Calu3 (cell line): ENCODE measurements at regions of chr12 and their contacts with region 1.

Region 1: GRCh38 chr12:116236148-116236731 is 41.3 kb downstream of the MED13L start:
- DNase-seq: peak; percentile 42
- H3K4me3 Mint-ChIP-seq: no peak overlapping the region
- H3K27ac Mint-ChIP-seq: no peak overlapping the region
- H3K4me1 Mint-ChIP-seq: no peaks in the 10 kb centered on the region
- H3K27me3 Mint-ChIP-seq: no peaks in the 10 kb centered on the region
- CTCF ChIP-seq: peak; percentile 56

Region 2: GRCh38 chr12:115998119-115998633 is 238.1 kb before region 1 on chr12:
- CTCF ChIA-PET with region 1: no interaction called
- intact Hi-C with region 1: loop called (anchors 5 kb)
- DNase-seq: peak; percentile 22
- H3K4me3 Mint-ChIP-seq: no peak overlapping the region
- H3K27ac Mint-ChIP-seq: no peak overlapping the region
- H3K4me1 Mint-ChIP-seq: no peaks in the 10 kb centered on the region
- H3K27me3 Mint-ChIP-seq: no peaks in the 10 kb centered on the region
- CTCF ChIP-seq: peak; percentile 79

Region 3: DNA sequence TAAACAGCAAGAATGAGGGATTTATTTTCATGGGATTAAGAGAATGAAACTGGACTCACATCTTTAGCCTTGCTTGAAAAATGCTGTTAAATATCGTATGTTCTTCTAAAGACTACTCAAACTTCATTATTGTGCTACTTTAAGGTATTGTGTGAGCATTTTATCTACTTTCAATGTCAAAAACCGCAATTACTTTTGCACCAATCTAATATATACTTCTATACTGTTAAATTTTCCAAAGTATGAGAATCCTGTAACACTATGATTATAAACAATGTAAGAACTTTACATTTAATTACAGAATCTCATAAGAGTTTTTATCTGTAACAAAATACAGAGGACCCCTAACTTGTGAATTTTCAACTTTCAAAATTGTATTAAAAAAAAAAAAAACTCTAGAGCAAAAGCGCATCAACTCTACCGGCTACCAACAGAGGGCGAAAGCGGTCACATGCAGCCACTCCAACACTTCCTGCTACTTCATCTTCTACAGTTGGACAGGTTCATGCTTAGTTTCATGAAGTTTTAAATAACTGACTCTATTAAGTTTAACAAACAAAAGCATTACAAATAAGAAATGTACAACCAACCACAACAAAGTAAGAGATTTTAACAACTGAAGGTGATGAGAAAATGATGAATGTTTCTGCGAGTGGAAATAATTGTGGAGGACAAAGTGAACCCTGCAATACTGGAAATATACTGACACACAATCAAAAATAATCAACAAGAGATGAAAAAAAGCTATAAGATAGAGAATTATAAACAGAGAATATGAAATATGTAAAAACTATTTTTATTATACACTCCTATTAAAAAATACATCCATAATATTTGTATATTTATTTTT is 169.6 kb before region 1 on chr12:
- CTCF ChIA-PET with region 1: no interaction called
- intact Hi-C with region 1: loop called (anchors 2 kb)
- DNase-seq: peak; percentile 52
- H3K4me3 Mint-ChIP-seq: no peak overlapping the region
- H3K27ac Mint-ChIP-seq: no peak overlapping the region
- H3K4me1 Mint-ChIP-seq: no peaks in the 10 kb centered on the region
- H3K27me3 Mint-ChIP-seq: no peaks in the 10 kb centered on the region
- CTCF ChIP-seq: peak; percentile 89

Region 4: DNA sequence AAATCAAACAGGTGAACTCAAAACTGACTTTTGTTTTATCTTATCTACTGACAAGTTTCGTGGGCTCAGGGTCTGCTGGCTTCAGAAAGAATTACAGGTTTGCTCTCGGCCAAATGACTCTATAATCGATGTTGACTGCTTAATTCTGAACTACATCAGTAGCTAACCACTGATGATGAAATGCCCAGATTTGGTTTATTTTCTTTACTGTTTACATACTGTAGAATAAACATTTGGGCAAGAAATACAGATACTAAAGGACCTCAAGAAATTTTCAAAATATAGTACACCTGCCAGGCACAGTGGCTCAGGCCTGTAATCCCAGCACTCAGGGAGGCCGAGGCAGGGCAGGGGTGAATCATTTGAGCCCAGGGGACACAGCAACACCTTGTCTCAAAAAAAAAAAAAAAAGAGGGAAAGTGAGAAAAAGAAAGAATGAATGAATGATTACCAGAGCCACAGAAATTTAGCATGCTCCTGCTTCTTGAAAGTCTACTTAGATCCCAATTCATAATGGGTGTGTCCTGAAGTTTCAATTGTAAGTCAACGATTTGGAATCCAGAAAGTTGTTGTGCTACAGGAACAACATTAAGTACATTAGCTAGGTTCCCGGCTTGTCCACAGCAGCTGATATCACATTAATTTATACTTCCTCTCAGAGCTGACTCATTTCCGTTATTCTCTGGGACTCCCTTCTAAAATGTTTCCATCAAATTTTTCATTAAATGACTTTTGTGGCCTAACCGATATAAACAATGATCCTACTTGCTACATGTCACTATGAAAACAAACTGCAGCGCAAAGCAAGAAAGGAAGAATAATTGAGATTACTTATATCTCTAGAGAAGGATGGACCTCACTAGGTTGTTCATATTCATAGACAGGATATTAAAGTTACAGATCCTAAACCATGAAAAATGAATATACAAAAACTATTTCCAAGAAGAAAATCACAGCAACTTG is 93.0 kb before region 1 on chr12:
- CTCF ChIA-PET with region 1: no interaction called
- intact Hi-C with region 1: loop called (anchors 1 kb)
- DNase-seq: no peak
- H3K4me3 Mint-ChIP-seq: no peak overlapping the region
- H3K27ac Mint-ChIP-seq: peak overlapping the region; percentile 81
- H3K4me1 Mint-ChIP-seq: peaks cover 37% of the 10 kb centered on the region
- H3K27me3 Mint-ChIP-seq: no peaks in the 10 kb centered on the region
- CTCF ChIP-seq: no peak

Region 5: DNA sequence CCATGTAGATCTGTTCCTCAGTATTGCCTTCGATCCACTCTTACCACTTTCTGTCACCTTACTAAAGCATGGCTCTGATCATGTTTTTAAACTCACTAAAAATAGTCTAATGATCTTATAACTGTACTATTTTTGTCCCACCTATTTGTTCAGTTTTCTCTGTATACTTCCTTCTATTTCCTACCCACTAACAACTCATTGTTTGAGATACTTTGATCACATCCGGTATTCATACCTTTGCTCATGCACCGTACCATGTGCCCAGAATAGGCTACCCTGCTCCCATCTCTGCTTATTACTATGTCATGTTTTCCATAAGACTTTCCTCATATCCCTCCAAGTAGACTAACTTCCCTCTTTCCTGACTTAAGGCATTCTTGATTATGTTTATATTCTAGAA is 87.4 kb before region 1 on chr12:
- CTCF ChIA-PET with region 1: no interaction called
- intact Hi-C with region 1: loop called (anchors 2 kb)
- DNase-seq: peak; percentile 28
- H3K4me3 Mint-ChIP-seq: peak overlapping the region; percentile 1
- H3K27ac Mint-ChIP-seq: peak overlapping the region; percentile 18
- H3K4me1 Mint-ChIP-seq: peaks cover 45% of the 10 kb centered on the region
- H3K27me3 Mint-ChIP-seq: no peaks in the 10 kb centered on the region
- CTCF ChIP-seq: no peak

Region 6: DNA sequence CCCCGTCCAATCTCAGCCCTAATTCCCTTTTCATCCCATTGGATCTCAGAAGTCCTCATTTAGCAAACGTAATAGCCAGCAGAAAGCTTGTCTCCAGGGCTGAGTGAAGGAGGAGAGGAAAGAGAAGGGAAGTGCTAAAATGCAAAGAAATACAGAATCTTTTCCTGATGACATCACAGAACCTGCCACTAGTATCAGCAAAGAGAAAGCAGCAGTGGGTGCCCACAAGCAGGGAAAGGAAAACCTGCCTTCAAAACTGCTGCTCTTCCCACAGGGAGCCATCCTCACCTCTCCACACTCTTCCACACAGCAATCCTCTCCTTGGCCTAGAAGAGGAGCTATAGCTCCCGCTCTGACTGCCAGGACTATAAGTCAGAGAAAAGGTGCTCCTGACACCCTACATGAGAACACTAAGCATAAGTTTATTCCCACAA is 29.9 kb after region 1 on chr12:
- CTCF ChIA-PET with region 1: no interaction called
- intact Hi-C with region 1: no loop called
- DNase-seq: no peak
- H3K4me3 Mint-ChIP-seq: no peak overlapping the region
- H3K27ac Mint-ChIP-seq: no peak overlapping the region
- H3K4me1 Mint-ChIP-seq: peaks cover 9% of the 10 kb centered on the region
- H3K27me3 Mint-ChIP-seq: no peaks in the 10 kb centered on the region
- CTCF ChIP-seq: no peak